Astrocyte of the cerebellum (primary cell): ENCODE measurements at regions of chr7 and their contacts with region 1.

Region 1: GRCh38 chr7:138799336-138800005 is 1.5 kb upstream of the ATP6V0A4 start:
- DNase-seq: no peak
- H3K4me3 ChIP-seq: no peak overlapping the region
- CTCF ChIP-seq: no peak

Region 2: GRCh38 chr7:138755327-138755747 is 44.1 kb before region 1 on chr7:
- in situ Hi-C with region 1: loop called (anchors 5 kb)
- DNase-seq: no peak
- H3K4me3 ChIP-seq: no peak overlapping the region
- CTCF ChIP-seq: no peak